Dendritic cell treated with granulocyte-macrophage colony-stimulating factor and Interleukin-4, amounts not matched to agents 40 ng/mL and 50 ng/mL, for 4 days (primary cell): ENCODE measurements at regions of chr2 and their contacts with region 1.

Region 1: DNA sequence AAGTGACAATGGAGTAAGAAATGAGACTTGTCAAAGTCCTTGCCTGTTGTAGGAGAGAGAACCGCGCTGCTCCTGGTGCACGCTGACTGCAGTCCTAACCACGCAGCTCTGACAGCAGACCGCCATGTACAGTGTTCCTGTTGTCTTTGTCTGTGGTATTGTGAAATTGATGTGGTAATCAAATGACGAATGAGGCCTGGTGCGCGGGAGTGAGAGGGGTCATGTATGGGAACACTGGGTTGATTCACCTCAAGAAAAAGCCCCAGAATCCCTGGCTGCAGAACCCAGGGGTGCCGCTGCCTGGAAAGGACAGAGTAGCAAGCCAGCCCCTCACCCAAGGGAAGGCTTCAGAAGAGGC is 64.0 kb downstream of the INPP4A start:
- H3K4me3 Mint-ChIP-seq: peak overlapping the region; percentile 45
- H3K27ac Mint-ChIP-seq: peak overlapping the region; percentile 92
- H3K4me1 Mint-ChIP-seq: peaks cover 90% of the 10 kb centered on the region
- H3K27me3 Mint-ChIP-seq: no peaks in the 10 kb centered on the region

Region 2: DNA sequence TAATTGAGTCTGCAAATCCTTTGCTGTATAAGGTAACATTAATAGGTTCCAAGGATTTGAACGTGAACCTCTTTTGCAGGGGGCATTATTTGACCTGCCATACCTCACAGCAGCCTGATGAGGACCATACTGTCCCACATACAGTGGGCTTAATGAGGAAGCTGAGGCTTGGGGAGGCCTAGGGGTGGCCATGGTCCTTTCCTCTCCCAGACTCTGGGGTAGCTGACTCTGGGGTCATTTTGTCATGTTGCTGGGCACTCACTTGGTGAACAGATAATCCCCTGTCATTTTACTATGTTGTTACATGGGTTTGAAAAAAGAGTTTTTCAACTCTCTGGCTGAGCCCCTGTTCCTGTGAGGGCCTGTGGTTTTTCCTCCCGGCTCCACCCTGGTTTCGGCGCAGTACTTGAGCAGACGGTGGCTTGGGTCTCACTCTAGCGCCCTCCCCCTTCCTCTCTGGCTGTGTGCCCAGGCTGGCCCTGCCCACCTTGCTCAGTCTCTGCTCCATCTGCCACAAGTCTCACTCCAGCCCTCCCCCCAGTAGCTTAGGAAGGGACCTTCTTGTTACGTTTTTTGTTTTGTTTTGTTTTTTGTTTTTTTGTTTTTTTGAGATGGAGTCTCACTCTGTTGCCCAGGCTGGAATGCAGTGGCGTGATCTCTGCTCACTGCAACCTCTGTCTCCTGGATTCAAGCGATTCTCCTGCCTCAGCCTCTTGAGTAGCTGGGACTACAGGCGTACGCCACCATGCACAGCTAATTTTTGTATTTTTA is 43.0 kb before region 1 on chr2:
- intact Hi-C with region 1: loop called (anchors 2 kb)
- H3K4me3 Mint-ChIP-seq: peak overlapping the region; percentile 59
- H3K27ac Mint-ChIP-seq: peak overlapping the region; percentile 94
- H3K4me1 Mint-ChIP-seq: peaks cover 85% of the 10 kb centered on the region
- H3K27me3 Mint-ChIP-seq: no peaks in the 10 kb centered on the region

Region 3: GRCh38 chr2:98487806-98488651 is 20.7 kb before region 1 on chr2:
- intact Hi-C with region 1: no loop called
- H3K4me3 Mint-ChIP-seq: no peak overlapping the region
- H3K27ac Mint-ChIP-seq: peak overlapping the region; percentile 66
- H3K4me1 Mint-ChIP-seq: peaks cover 74% of the 10 kb centered on the region
- H3K27me3 Mint-ChIP-seq: no peaks in the 10 kb centered on the region